IMR-90 (cell line): ENCODE measurements at regions of chr10 and their contacts with region 1.

Region 1: GRCh38 chr10:114779803-114780609 is 41.6 kb upstream of the FHIP2A start:
- DNase-seq: peak; percentile 92
- ATAC-seq: peak; percentile 83
- H3K4me3 ChIP-seq: no peak overlapping the region
- H3K27ac ChIP-seq: no peak overlapping the region
- H3K4me1 ChIP-seq: peaks cover 13% of the 10 kb centered on the region
- H3K27me3 ChIP-seq: no peaks in the 10 kb centered on the region
- CTCF ChIP-seq: no peak
- POLR2A ChIP-seq: no peak
- RAD21 ChIP-seq: no peak

Region 2: GRCh38 chr10:114470956-114471905 is 308.8 kb before region 1 on chr10:
- CTCF ChIA-PET with region 1: interaction called, 4 read pairs
- POLR2A ChIA-PET with region 1: no interaction called
- dilution Hi-C with region 1: no loop called
- in situ Hi-C with region 1: loop called (anchors 5 kb)
- intact Hi-C with region 1: no loop called
- DNase-seq: peak; percentile 77
- ATAC-seq: peak; percentile 98
- H3K4me3 ChIP-seq: no peak overlapping the region
- H3K27ac ChIP-seq: no peak overlapping the region
- H3K4me1 ChIP-seq: no peaks in the 10 kb centered on the region
- H3K27me3 ChIP-seq: peaks cover 2% of the 10 kb centered on the region; the same call in 1 of the 2 replicates
- CTCF ChIP-seq: peak; percentile 86
- POLR2A ChIP-seq: no peak
- RAD21 ChIP-seq: peak; percentile 83

Region 3: DNA sequence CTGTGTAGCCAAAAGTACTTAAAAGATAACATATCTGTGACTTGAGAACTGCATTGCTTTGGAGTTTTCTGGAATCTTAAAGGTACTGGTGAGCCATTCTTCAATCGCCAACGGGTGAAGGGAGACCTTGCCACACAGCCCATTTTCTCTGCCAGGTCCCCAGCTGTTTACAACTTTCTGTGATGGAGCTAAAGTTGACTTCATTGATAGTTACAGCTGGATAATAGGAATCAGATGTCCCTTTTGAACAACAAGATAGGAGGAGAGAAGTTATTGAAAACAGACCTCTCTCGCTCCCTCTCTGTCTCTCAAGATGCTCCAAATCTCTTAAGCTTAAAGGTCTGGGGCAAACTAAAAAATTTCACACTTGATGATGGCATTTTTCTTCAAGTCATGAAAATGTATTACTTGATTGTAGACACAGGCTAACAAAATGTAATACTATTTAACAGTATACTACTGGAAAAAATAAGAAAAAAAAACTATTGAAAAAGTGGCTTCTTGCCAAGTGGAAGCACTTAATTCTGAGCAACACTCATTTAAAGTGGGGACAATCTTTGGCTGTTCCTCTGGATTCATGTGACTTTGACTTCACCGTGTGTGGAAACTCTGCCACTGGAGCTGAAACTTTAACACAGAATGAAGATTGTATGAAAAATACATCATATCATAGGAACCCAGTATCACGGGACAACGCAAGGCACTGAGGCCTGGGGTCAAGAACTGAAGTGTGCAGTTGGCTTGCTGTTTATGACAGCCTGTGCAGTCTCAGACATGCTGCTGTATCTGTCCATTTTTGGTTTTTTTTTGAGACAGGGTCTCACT is 297.3 kb before region 1 on chr10:
- CTCF ChIA-PET with region 1: interaction called, 11 read pairs
- POLR2A ChIA-PET with region 1: no interaction called
- dilution Hi-C with region 1: no loop called
- in situ Hi-C with region 1: no loop called
- intact Hi-C with region 1: no loop called
- DNase-seq: no peak
- ATAC-seq: no peak
- H3K4me3 ChIP-seq: no peak overlapping the region
- H3K27ac ChIP-seq: no peak overlapping the region
- H3K4me1 ChIP-seq: no peaks in the 10 kb centered on the region
- H3K27me3 ChIP-seq: peaks cover 4% of the 10 kb centered on the region
- CTCF ChIP-seq: no peak
- POLR2A ChIP-seq: no peak
- RAD21 ChIP-seq: no peak

Region 4: GRCh38 chr10:114631666-114632417 is 148.2 kb before region 1 on chr10:
- CTCF ChIA-PET with region 1: no interaction called
- POLR2A ChIA-PET with region 1: no interaction called
- dilution Hi-C with region 1: no loop called
- in situ Hi-C with region 1: no loop called
- intact Hi-C with region 1: loop called (anchors 5 kb)
- DNase-seq: no peak
- ATAC-seq: peak; percentile 35
- H3K4me3 ChIP-seq: peak overlapping the region; percentile 66
- H3K27ac ChIP-seq: peak overlapping the region; percentile 3; the same call in 1 of the 2 replicates
- H3K4me1 ChIP-seq: peaks cover 13% of the 10 kb centered on the region
- H3K27me3 ChIP-seq: peaks cover 5% of the 10 kb centered on the region; the same call in 1 of the 2 replicates
- CTCF ChIP-seq: no peak
- POLR2A ChIP-seq: no peak
- RAD21 ChIP-seq: no peak

Region 5: DNA sequence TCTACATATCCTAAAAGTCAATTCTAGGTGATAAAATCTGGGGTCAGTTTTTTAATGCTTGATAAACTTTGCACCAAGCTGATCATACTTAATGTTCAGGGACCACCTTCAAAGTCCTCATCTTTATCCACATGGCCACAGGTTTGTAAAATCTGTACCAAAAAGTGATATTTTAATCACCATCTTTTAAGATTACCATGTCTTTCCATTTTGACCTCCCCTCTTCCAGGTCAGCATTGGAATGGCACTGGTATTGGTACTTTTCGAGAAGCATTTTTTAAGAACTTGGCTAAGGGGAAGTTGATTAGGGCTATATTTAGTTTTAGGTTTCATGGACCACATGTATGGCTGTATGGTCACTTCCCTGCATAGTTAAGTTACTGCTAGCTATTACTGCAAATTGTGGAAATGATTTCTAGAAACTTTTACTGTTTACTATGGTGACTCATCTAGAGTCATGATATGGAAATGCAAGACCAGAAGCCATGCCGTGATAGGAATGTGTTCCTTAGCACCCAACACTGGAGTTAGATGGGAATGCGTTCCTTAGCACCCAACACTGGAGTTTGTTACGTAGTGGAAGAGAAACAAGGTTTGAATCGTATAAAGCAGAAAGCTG is 71.2 kb before region 1 on chr10:
- CTCF ChIA-PET with region 1: no interaction called
- POLR2A ChIA-PET with region 1: no interaction called
- dilution Hi-C with region 1: no loop called
- in situ Hi-C with region 1: loop called (anchors 5 kb)
- intact Hi-C with region 1: loop called (anchors 2 kb)
- DNase-seq: peak; percentile 89
- ATAC-seq: peak; percentile 90
- H3K4me3 ChIP-seq: no peak overlapping the region
- H3K27ac ChIP-seq: no peak overlapping the region
- H3K4me1 ChIP-seq: peaks cover 7% of the 10 kb centered on the region
- H3K27me3 ChIP-seq: no peaks in the 10 kb centered on the region; the same call in 1 of the 2 replicates
- CTCF ChIP-seq: no peak
- POLR2A ChIP-seq: no peak
- RAD21 ChIP-seq: 0 out of 2 replicates have a peak, but pooled peaks have one; percentile 12

Region 6: GRCh38 chr10:114714281-114714741 is 65.7 kb before region 1 on chr10:
- CTCF ChIA-PET with region 1: no interaction called
- POLR2A ChIA-PET with region 1: no interaction called
- dilution Hi-C with region 1: no loop called
- in situ Hi-C with region 1: loop called (anchors 5 kb)
- intact Hi-C with region 1: loop called (anchors 2 kb)
- DNase-seq: peak; percentile 98
- ATAC-seq: peak; percentile 95
- H3K4me3 ChIP-seq: no peak overlapping the region
- H3K27ac ChIP-seq: peak overlapping the region; percentile 76
- H3K4me1 ChIP-seq: peaks cover 14% of the 10 kb centered on the region
- H3K27me3 ChIP-seq: no peaks in the 10 kb centered on the region
- CTCF ChIP-seq: no peak
- POLR2A ChIP-seq: no peak
- RAD21 ChIP-seq: no peak